Ovary (tissue), 10 donors: ENCODE measurements at regions of chr2 and their contacts with region 1.

Region 1: DNA sequence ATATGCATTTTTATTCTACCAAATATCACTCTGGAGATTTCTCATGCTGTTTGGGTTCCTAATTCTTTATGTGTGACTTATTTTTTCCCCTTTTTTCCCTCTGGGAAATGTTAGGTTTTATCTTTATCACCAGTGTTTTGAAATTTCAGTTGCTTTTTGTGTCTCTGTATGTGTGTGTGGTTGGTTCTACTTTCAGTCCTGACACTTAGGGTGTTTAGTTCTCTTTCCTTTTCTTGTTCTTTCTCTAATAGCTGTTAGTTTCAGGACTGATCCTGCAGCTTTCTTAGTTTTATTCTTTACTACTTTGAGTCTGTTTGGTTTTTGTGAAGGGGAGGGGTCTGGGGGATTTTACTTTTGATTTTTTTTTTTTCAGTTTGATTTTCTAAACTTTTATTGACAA is 23.1 kb downstream of the PPM1B start:
- DNase-seq: no peak
- H3K4me3 ChIP-seq: no peak overlapping the region
- H3K27ac ChIP-seq: no peak overlapping the region
- H3K4me1 ChIP-seq: peaks cover 2% of the 10 kb centered on the region
- H3K27me3 ChIP-seq: no peaks in the 10 kb centered on the region
- CTCF ChIP-seq: no peak
- EP300 ChIP-seq: no peak
- POLR2A ChIP-seq: no peak

Region 2: GRCh38 chr2:44233450-44234128 is 41.9 kb after region 1 on chr2:
- intact Hi-C with region 1: no loop called
- DNase-seq: no peak
- H3K4me3 ChIP-seq: no peak overlapping the region
- H3K27ac ChIP-seq: no peak overlapping the region
- H3K4me1 ChIP-seq: no peaks in the 10 kb centered on the region
- H3K27me3 ChIP-seq: no peaks in the 10 kb centered on the region
- CTCF ChIP-seq: no peak
- EP300 ChIP-seq: no peak
- POLR2A ChIP-seq: no peak

Region 3: GRCh38 chr2:45391866-45392265 is 1200.1 kb after region 1 on chr2:
- intact Hi-C with region 1: loop called in 1 of 4 experiments (anchors 5 kb)
- DNase-seq: no peak
- H3K4me3 ChIP-seq: no peak overlapping the region
- H3K27ac ChIP-seq: no peak overlapping the region
- H3K4me1 ChIP-seq: no peaks in the 10 kb centered on the region
- H3K27me3 ChIP-seq: no peaks in the 10 kb centered on the region
- CTCF ChIP-seq: no peak
- EP300 ChIP-seq: no peak
- POLR2A ChIP-seq: no peak